AG04449 (cell line): ENCODE measurements at regions of chr11 and their contacts with region 1.

Region 1: DNA sequence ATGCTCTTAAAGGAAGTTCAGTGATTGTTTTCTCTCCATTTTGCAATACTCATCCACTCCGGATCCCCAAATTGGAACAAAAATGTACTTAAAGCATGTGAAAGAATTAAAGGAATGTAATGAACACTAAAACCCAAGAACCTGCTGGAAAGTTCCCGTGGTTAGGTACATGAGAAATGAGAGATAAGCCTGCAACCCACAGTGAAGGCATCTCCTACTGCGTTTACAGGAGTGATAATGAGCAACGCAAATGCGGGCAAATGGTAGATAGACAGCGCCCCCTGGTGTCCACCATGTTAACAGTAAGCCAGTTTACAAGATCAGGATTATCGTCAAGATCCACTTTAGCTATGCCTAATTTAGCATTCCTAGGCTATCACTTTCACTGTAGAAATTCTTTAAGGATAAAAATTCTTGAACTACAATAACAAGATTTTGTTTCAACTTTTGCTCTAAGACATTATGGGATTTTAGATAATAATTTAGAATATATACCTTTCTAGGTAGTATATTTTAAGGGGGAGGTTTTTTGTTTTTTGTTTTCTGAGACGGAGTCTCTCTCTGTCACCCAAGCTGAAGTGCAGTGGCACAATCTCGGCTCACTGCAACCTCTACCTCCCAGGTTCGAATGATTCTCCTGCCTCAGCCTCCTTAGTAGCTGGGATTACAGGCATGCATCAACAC is 29.9 kb downstream of the ALG9 start:
- DNase-seq: peak; percentile 96
- H3K4me3 ChIP-seq: no peak overlapping the region
- CTCF ChIP-seq: peak; percentile 78

Region 2: GRCh38 chr11:111454561-111455192 is 386.8 kb before region 1 on chr11:
- CTCF ChIA-PET with region 1: interaction called, 44 read pairs
- POLR2A ChIA-PET with region 1: no interaction called
- DNase-seq: peak; percentile 5
- H3K4me3 ChIP-seq: no peak overlapping the region
- CTCF ChIP-seq: peak; percentile 69

Region 3: DNA sequence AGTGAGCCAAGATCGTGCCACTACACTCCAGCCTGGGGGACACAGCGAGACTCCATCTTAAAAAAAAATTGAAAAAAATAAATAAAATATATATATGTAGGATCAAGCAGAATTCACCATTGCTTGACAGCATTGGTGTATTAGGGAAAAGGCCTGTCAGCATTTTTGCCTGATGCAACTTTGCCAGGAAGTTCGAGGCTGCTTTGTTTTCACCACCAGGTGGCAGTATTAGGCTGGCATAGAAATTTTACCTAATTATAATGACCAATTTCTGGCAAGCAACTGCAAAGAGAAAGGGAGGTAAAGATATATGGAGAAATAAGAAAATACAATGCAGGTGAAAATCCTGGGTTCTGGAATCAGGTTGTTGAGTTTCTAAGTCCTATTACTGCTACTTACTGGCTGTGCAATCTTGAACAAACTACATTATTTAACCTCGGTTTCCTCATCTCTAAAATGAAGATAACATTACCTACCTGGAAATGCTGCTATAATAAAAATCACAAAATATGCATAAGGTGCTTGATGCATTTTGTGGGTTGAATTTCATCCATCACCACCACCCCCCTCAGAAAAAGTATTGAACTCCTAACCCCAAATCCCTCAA is 276.3 kb before region 1 on chr11:
- CTCF ChIA-PET with region 1: interaction called, 20 read pairs
- POLR2A ChIA-PET with region 1: no interaction called
- DNase-seq: no peak
- H3K4me3 ChIP-seq: no peak overlapping the region
- CTCF ChIP-seq: peak; percentile 62

Region 4: GRCh38 chr11:111586388-111586831 is 255.1 kb before region 1 on chr11:
- CTCF ChIA-PET with region 1: interaction called, 66 read pairs
- POLR2A ChIA-PET with region 1: interaction called, 3 read pairs
- DNase-seq: no peak
- H3K4me3 ChIP-seq: no peak overlapping the region
- CTCF ChIP-seq: peak; percentile 43

Region 5: GRCh38 chr11:111761036-111761435 is 80.5 kb before region 1 on chr11:
- CTCF ChIA-PET with region 1: interaction called, 10 read pairs
- POLR2A ChIA-PET with region 1: no interaction called
- DNase-seq: no peak
- H3K4me3 ChIP-seq: no peak overlapping the region
- CTCF ChIP-seq: no peak

Region 6: DNA sequence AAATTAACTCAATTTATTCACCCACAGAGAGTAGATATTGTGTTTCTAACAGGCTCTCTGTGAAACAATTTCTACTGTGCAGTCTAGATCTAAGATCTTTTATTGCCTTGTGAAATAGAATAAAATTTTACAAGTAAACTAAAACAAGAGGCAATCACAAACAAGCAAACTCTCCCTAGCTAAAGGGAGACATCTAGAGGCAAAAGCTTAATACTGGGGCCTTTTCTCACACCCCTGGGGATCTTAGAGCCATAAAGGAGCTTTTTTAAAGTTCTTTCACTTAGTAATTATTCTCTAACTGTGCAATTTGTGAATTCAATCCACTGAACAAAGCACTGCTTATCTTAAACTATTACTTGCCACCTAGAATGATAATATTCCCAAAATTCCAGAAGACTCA is 10.1 kb after region 1 on chr11:
- CTCF ChIA-PET with region 1: interaction called, 51 read pairs
- POLR2A ChIA-PET with region 1: no interaction called
- DNase-seq: no peak
- H3K4me3 ChIP-seq: no peak overlapping the region
- CTCF ChIP-seq: peak; percentile 35

Region 7: DNA sequence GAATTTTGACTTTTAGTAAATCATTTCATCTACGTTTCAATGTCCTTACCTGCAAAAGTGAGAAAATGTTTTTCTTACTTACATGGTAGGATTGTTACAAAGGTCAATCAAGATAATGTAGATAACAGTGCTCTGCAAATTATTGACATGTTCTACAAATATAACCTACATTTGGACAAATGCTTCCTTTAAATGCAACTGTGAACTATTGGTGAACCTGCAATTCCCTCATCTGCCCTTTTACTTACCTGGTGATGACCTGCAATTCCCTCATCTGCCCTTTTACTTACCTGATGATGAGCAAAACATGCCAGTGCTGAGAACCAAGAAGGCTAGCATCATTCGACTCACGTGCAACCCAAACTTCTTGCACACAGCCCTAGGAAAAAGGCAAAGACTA is 18.7 kb after region 1 on chr11:
- CTCF ChIA-PET with region 1: interaction called, 51 read pairs
- POLR2A ChIA-PET with region 1: interaction called, 3 read pairs
- DNase-seq: no peak
- H3K4me3 ChIP-seq: no peak overlapping the region
- CTCF ChIP-seq: no peak

Region 8: GRCh38 chr11:112113539-112114457 is 272.3 kb after region 1 on chr11:
- CTCF ChIA-PET with region 1: no interaction called
- POLR2A ChIA-PET with region 1: no interaction called
- DNase-seq: no peak
- H3K4me3 ChIP-seq: no peak overlapping the region
- CTCF ChIP-seq: peak; percentile 62